ENCODE measurements at regions of chr15 and their contacts with region 1.

Region 1: GRCh38 chr15:40857601-40858341 is 13.9 kb downstream of the SPINT1 start:
- DNase-seq: peak; percentile 96
- H3K4me3 Mint-ChIP-seq: no peak overlapping the region
- H3K27ac Mint-ChIP-seq: no peak overlapping the region
- H3K4me1 Mint-ChIP-seq: peaks cover 15% of the 10 kb centered on the region
- H3K27me3 Mint-ChIP-seq: peaks cover 4% of the 10 kb centered on the region

Region 2: DNA sequence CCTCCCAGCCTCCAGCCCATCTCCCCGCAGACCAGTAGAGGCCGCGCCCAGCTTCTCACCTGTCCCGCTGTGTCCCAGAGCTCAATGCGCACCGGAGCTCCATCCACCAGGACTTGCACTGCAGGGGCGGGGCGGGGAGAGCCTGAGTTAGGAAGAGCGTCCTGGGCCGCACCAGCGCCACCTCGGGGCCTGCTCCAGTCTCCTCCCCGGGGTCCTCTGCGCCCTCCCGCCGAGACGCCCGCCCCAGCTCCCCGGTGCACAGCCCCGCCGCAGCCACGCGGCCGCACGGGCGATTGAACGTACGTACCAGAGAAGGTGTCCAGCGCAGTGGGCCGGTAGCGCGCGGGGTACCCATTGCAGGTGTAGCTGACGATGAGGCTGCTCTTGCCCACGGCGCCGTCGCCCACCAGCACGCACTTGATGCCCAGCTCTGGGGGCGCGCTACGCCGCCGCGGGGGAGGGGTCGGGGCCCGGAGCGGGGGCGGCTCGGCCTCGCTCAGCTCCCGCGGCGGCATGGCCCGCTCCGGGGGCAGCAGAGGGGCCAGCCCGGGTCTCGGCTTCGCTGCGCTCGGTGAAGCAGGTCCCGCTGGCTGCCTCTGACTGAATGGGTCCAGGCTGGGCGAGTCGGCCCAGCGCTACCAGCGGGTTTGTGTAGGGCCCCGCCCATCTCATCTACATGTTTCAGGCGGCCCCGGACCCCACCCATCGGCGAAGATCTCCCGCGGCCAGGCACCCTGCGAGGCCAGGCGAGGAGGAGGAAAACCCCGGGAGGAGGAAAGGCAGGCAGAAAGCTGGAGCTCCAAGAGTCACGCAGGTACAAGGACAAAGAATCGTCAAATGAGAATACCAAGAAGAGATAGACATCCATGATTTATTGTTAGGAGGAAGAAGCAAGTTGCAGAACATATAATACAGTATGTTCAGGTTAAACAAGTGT is 16.1 kb after region 1 on chr15 and contains the start of gene RHOV:
- intact Hi-C with region 1: loop called (anchors 1 kb)
- DNase-seq: peak; percentile 89
- H3K4me3 Mint-ChIP-seq: peak within 1 kb of the TSS; percentile 89
- H3K27ac Mint-ChIP-seq: peak within 1 kb of the TSS; percentile 75
- H3K4me1 Mint-ChIP-seq: peaks cover 30% of the 10 kb centered on the region
- H3K27me3 Mint-ChIP-seq: peaks cover 18% of the 10 kb centered on the region
- total RNA-seq, gene RHOV: 1.0 and 1.5 TPM in 2 replicates

Region 3: GRCh38 chr15:41150279-41150678 is 292.5 kb after region 1 on chr15:
- intact Hi-C with region 1: loop called (anchors 1 kb)
- DNase-seq: no peak
- H3K4me3 Mint-ChIP-seq: peak overlapping the region; percentile 49
- H3K27ac Mint-ChIP-seq: no peak overlapping the region
- H3K4me1 Mint-ChIP-seq: peaks cover 19% of the 10 kb centered on the region
- H3K27me3 Mint-ChIP-seq: peaks cover 4% of the 10 kb centered on the region